Activated CD4-positive, alpha-beta memory T cell treated with anti-CD3 and anti-CD28 coated beads for 36 hours (primary cell): ENCODE measurements at regions of chr12 and their contacts with region 1.

Region 1: GRCh38 chr12:11730299-11731041 is 81.0 kb downstream of the ETV6 start:
- DNase-seq: peak; percentile 10
- H3K4me3 Mint-ChIP-seq: no peak overlapping the region
- H3K27ac Mint-ChIP-seq: peak overlapping the region; percentile 62
- H3K4me1 Mint-ChIP-seq: peaks cover 76% of the 10 kb centered on the region
- H3K27me3 Mint-ChIP-seq: no peaks in the 10 kb centered on the region

Region 2: DNA sequence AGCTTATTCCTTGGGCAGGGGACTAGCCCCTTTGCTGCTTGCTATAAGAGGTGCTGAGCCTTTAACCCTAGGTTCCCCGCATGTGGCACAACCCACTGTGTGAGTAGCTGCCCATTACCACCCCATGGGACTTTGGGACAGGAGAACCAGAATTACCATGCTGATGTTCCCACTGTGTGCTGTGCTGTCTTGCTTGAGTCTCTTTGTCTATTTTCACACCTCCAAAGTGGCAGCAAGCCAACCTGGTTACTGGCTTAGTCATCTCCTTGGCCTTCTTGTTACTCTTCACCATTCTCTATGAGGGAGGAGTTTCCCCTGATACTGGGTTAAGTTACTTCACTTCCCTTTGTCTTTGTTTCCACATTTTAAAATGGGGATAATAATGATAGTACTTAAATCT is 154.4 kb before region 1 on chr12:
- CTCF ChIA-PET with region 1: interaction called, 4 read pairs
- POLR2A ChIA-PET with region 1: no interaction called
- intact Hi-C with region 1: loop called (anchors 5 kb)
- DNase-seq: peak; percentile 73
- H3K4me3 Mint-ChIP-seq: no peak overlapping the region
- H3K27ac Mint-ChIP-seq: no peak overlapping the region
- H3K4me1 Mint-ChIP-seq: peaks cover 24% of the 10 kb centered on the region
- H3K27me3 Mint-ChIP-seq: no peaks in the 10 kb centered on the region

Region 3: GRCh38 chr12:11711651-11712327 is 18.7 kb before region 1 on chr12:
- CTCF ChIA-PET with region 1: no interaction called
- POLR2A ChIA-PET with region 1: interaction called, 4 read pairs
- intact Hi-C with region 1: loop called (anchors 2 kb)
- DNase-seq: no peak
- H3K4me3 Mint-ChIP-seq: no peak overlapping the region
- H3K27ac Mint-ChIP-seq: peak overlapping the region; percentile 47
- H3K4me1 Mint-ChIP-seq: peaks cover 77% of the 10 kb centered on the region
- H3K27me3 Mint-ChIP-seq: no peaks in the 10 kb centered on the region

Region 4: GRCh38 chr12:11780521-11781101 is 50.1 kb after region 1 on chr12:
- CTCF ChIA-PET with region 1: no interaction called
- POLR2A ChIA-PET with region 1: interaction called, 3 read pairs
- intact Hi-C with region 1: loop called (anchors 2 kb)
- DNase-seq: peak; percentile 34
- H3K4me3 Mint-ChIP-seq: no peak overlapping the region
- H3K27ac Mint-ChIP-seq: peak overlapping the region; percentile 89
- H3K4me1 Mint-ChIP-seq: peaks cover 83% of the 10 kb centered on the region
- H3K27me3 Mint-ChIP-seq: no peaks in the 10 kb centered on the region

Region 5: GRCh38 chr12:11812586-11813427 is 82.3 kb after region 1 on chr12:
- CTCF ChIA-PET with region 1: interaction called, 3 read pairs
- POLR2A ChIA-PET with region 1: no interaction called
- intact Hi-C with region 1: loop called (anchors 5 kb)
- DNase-seq: peak; percentile 41
- H3K4me3 Mint-ChIP-seq: peak overlapping the region; percentile 63
- H3K27ac Mint-ChIP-seq: peak overlapping the region; percentile 78
- H3K4me1 Mint-ChIP-seq: peaks cover 80% of the 10 kb centered on the region
- H3K27me3 Mint-ChIP-seq: no peaks in the 10 kb centered on the region